ENCODE measurements at regions of chr9 and their contacts with region 1.

Region 1: DNA sequence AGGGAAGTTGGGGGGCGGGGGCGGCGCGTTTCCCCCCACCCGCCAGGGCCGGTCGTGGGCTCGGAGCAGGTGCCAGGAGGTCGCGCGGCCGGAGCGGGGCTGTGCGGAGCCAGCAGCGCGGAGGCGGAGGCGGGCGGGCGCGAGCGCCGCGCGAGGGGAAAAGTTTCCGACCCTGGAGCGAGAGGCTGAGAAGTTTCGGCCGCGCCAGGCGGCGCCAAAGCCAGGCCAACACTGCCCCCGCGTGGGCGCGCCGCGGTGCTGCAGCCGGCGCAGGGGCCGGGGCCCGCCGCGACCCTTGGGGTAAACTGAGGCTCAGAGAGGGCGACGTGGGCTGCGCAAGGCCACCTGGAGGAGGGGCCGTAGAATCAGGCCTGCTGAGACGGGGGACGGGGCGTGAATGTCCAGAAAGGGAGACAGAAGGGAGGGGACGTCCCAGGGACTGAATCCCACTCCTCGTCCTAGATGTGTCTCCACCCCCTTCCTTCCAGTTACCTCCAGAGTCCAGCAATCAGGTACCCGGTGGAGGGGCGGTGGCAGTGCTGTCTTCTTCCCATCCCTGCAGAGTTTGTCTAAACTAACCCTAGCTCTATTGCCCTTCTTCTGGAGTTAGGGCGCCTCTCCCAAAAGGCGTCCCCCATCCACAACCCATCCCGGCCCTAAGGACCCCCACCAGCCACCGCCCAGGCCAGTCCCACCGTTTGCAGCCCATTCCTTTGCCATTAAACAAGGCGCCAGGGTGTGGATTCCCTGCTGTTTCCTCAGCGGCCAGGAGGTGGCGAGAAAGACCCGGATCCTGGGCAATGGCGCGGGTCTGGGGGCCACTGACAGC is 10.2 kb downstream of the C9orf50 start:
- DNase-seq: peak; percentile 73 to 81 (median 76)
- ATAC-seq: peak; percentile 74
- H3K4me3 ChIP-seq: peak overlapping the region; percentile 64
- H3K27ac ChIP-seq: peak overlapping the region; percentile 74; the same call in 2 of the 3 replicates
- H3K4me1 ChIP-seq: peaks cover 11 to 68% of the 10 kb centered on the region in 2 experiments; a peak in 4 of 5 replicates
- H3K27me3 ChIP-seq: peaks cover 5 to 40% of the 10 kb centered on the region in 2 experiments; a peak in 4 of 5 replicates
- CTCF ChIP-seq: peak; percentile 74 to 94 (median 87)
- EP300 ChIP-seq: 0 out of 2 replicates have a peak, but pooled peaks have one; percentile 5
- POLR2A ChIP-seq: no peak
- RAD21 ChIP-seq: peak; percentile 98 to 99

Region 2: DNA sequence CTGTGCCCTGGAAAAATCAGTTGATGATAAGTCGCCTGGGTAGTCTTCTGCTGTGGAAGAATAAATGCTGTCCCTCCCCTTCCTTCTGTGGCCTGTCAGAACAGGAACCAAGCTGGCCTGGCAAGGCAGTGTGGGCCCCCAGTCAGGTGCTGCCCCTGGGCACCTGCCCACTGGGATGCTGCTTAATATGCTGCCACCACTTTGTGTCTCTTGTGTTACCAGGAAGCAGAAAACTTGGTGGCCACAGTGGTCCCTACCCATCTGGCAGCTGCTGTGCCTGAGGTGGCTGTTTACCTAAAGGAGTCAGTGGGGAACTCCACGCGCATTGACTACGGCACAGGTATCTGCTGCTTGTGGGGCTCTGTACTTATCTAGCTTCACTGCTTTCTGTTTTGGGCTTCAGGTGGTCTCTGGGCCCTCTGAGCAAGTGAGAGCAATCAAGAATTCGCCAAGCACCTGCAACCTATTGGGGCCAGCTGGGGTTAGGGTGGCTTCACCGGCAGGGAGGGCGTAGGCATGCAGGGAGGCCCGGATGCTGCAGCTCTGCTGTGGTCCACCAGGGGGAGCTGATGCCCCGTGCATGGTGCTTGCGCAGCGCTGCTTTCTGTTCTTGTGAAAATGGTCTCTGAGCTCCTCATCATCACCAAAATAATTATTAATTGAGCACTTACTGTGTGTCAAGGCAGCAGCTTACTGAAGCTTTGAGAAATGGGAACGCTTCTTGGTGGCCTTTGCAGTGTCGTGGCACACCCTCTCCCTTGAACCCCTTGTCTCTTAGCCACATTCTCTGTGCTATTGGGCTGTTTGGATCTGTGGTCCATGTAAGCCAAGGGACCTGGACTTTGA is 479.2 kb before region 1 on chr9:
- CTCF ChIA-PET with region 1: interaction called, 36 read pairs
- POLR2A ChIA-PET with region 1: interaction called, 5 read pairs
- in situ Hi-C with region 1: loop called (anchors 5 kb)
- intact Hi-C with region 1: no loop called
- DNase-seq: peak; percentile 83 to 89 (median 84)
- ATAC-seq: peak; percentile 99
- H3K4me3 ChIP-seq: no peak overlapping the region
- H3K27ac ChIP-seq: no peak overlapping the region
- H3K4me1 ChIP-seq: peaks cover 0 to 9% of the 10 kb centered on the region in 2 experiments; a peak in 2 of 5 replicates
- H3K27me3 ChIP-seq: no peaks in the 10 kb centered on the region
- CTCF ChIP-seq: peak; percentile 93 to 98 (median 95)
- EP300 ChIP-seq: 0 out of 2 replicates have a peak, but pooled peaks have one; percentile 21
- POLR2A ChIP-seq: no peak
- RAD21 ChIP-seq: peak; percentile 77 to 84

Region 3: GRCh38 chr9:129166623-129167557 is 443.8 kb before region 1 on chr9:
- CTCF ChIA-PET with region 1: no interaction called
- POLR2A ChIA-PET with region 1: no interaction called
- in situ Hi-C with region 1: no loop called
- intact Hi-C with region 1: loop called (anchors 2 kb)
- DNase-seq: peak; percentile 82 to 92 (median 90)
- ATAC-seq: peak; percentile 87
- H3K4me3 ChIP-seq: peak overlapping the region; percentile 34
- H3K27ac ChIP-seq: peak overlapping the region; percentile 50
- H3K4me1 ChIP-seq: peaks cover 29 to 33% of the 10 kb centered on the region in 2 experiments
- H3K27me3 ChIP-seq: peaks cover 0 to 1% of the 10 kb centered on the region in 2 experiments; a peak in 1 of 5 replicates
- CTCF ChIP-seq: no peak
- EP300 ChIP-seq: no peak
- POLR2A ChIP-seq: no peak
- RAD21 ChIP-seq: no peak

Region 4: GRCh38 chr9:129320575-129321263 is 290.0 kb before region 1 on chr9:
- CTCF ChIA-PET with region 1: no interaction called
- POLR2A ChIA-PET with region 1: no interaction called
- in situ Hi-C with region 1: loop called (anchors 25 kb)
- intact Hi-C with region 1: loop called (anchors 5 kb)
- DNase-seq: peak; percentile 53 to 63 (median 58)
- ATAC-seq: peak; percentile 87
- H3K4me3 ChIP-seq: no peak overlapping the region
- H3K27ac ChIP-seq: peak overlapping the region; percentile 34; the same call in 1 of the 3 replicates
- H3K4me1 ChIP-seq: peaks cover 14 to 27% of the 10 kb centered on the region in 2 experiments
- H3K27me3 ChIP-seq: 0 out of 5 replicates have a peak, but pooled peaks cover 0 to 3% of the 10 kb centered on the region in 2 experiments
- CTCF ChIP-seq: peak in 2 of 3 experiments; percentile 4 to 39; a peak in 2 of 6 replicates
- EP300 ChIP-seq: no peak
- POLR2A ChIP-seq: no peak
- RAD21 ChIP-seq: peak in 1 of 2 experiments; percentile 45; a peak in 3 of 4 replicates

Region 5: GRCh38 chr9:129460323-129461261 is 150.1 kb before region 1 on chr9:
- CTCF ChIA-PET with region 1: no interaction called
- POLR2A ChIA-PET with region 1: no interaction called
- in situ Hi-C with region 1: no loop called
- intact Hi-C with region 1: no loop called
- DNase-seq: peak; percentile 95 to 99 (median 97)
- ATAC-seq: peak; percentile 97
- H3K4me3 ChIP-seq: peak overlapping the region; percentile 28
- H3K27ac ChIP-seq: peak overlapping the region; percentile 94
- H3K4me1 ChIP-seq: peaks cover 30 to 53% of the 10 kb centered on the region in 2 experiments
- H3K27me3 ChIP-seq: no peaks in the 10 kb centered on the region; a peak in 1 of 5 replicates
- CTCF ChIP-seq: peak in 2 of 3 experiments; percentile 18 to 34; a peak in 3 of 6 replicates
- EP300 ChIP-seq: peak; percentile 71
- POLR2A ChIP-seq: peak; percentile 69
- RAD21 ChIP-seq: peak in 1 of 2 experiments; percentile 42; a peak in 3 of 4 replicates

Region 6: GRCh38 chr9:129487642-129488409 is 122.9 kb before region 1 on chr9:
- CTCF ChIA-PET with region 1: interaction called, 3 read pairs
- POLR2A ChIA-PET with region 1: interaction called, 3 read pairs
- in situ Hi-C with region 1: no loop called
- intact Hi-C with region 1: loop called (anchors 5 kb)
- DNase-seq: peak; percentile 66 to 77 (median 72)
- ATAC-seq: peak; percentile 38
- H3K4me3 ChIP-seq: peak overlapping the region; percentile 67
- H3K27ac ChIP-seq: peak overlapping the region; percentile 100
- H3K4me1 ChIP-seq: peaks cover 71 to 84% of the 10 kb centered on the region in 2 experiments
- H3K27me3 ChIP-seq: no peaks in the 10 kb centered on the region
- CTCF ChIP-seq: no peak
- EP300 ChIP-seq: no peak
- POLR2A ChIP-seq: peak; percentile 17
- RAD21 ChIP-seq: no peak

Region 7: DNA sequence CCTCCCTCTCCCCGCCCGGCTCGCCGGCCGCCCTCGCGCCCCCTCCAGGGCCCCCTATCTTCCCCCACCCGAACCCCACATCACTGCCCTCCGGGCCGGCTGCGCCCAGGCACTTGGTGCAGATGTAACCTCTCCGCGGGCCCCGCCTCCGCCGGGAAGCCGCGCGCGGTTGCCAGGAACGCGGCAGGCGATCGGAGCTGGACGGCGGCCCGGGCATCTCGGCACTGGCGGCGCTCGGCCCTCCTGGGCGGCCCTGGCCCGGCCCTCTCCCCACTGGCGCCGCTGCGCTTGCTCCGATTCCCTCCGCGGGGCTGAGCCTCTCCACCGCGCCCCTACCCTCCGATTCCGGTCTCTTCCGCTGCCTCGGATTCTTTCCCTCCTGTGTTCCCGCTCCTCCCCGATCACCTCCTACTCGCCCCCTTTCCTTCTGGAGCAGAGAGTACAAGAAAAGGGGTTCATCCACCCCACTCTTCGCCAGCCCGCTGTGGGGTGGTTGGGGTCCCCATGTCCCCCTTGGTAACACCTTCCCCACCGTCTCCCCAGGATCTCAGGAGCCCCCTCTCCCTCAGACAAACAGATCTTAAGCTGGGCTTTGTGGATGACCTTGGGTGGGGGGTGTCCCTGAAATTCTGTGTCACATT is 60.4 kb before region 1 on chr9:
- CTCF ChIA-PET with region 1: no interaction called
- POLR2A ChIA-PET with region 1: interaction called, 4 read pairs
- in situ Hi-C with region 1: no loop called
- intact Hi-C with region 1: loop called (anchors 10 kb)
- DNase-seq: no peak
- ATAC-seq: no peak
- H3K4me3 ChIP-seq: no peak overlapping the region
- H3K27ac ChIP-seq: no peak overlapping the region
- H3K4me1 ChIP-seq: peaks cover 0 to 14% of the 10 kb centered on the region in 2 experiments; a peak in 2 of 5 replicates
- H3K27me3 ChIP-seq: peaks cover 9 to 45% of the 10 kb centered on the region in 2 experiments; a peak in 3 of 5 replicates
- CTCF ChIP-seq: no peak
- EP300 ChIP-seq: no peak
- POLR2A ChIP-seq: no peak
- RAD21 ChIP-seq: no peak

Region 8: DNA sequence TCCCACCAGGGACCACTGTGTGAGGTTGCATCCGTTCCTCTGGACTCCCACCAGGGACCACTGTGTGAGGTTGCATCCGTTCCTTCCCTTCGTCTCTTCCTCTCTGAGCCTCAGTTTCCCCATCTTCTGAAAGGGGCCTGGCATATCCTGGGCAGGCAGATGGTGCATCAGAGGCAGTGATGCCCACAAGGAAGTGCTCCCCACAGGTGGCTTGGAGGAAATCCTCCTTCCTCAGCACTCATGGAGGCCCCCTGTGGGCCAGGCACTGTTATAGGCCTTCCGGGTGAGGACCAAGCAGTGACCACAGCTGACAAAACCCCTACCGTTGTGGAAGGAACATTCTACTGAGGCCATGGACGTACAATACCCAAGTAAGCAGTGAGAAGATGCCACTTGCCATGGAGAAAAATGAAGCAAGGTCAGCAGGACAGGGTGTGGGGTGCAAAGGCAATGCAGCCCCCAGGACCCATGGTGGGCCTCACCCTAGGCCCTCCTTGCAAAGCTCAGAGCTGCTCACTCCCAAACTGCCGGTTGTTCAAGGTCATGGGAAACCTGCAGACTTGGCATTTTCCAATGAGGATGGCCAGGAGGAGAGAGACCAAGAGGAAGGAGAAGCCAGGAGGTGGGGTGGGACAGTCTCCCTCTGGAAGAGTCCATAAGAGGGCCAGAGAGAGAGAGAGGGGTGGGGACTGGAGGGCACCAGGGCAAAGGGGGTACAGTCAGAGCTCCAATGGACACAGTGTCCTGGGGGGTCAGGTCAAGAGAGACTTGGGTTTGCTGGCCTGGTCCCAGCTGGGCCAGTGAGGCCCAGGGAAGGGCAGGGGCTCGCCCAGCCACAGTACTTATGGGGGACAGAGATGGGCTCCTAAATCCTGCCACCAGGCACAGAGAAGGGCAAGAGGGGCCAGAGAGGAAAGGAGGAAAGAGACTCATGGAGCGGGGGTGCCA is 40.9 kb before region 1 on chr9:
- CTCF ChIA-PET with region 1: interaction called, 3 read pairs
- POLR2A ChIA-PET with region 1: no interaction called
- in situ Hi-C with region 1: loop called (anchors 5 kb)
- intact Hi-C with region 1: loop called (anchors 2 kb)
- DNase-seq: peak; percentile 55 to 65 (median 60)
- ATAC-seq: peak; percentile 75
- H3K4me3 ChIP-seq: no peak overlapping the region
- H3K27ac ChIP-seq: peak overlapping the region; percentile 85
- H3K4me1 ChIP-seq: peaks cover 27 to 43% of the 10 kb centered on the region in 2 experiments
- H3K27me3 ChIP-seq: no peaks in the 10 kb centered on the region
- CTCF ChIP-seq: peak; percentile 54 to 69 (median 60)
- EP300 ChIP-seq: no peak
- POLR2A ChIP-seq: no peak
- RAD21 ChIP-seq: peak in 1 of 2 experiments; percentile 56; a peak in 2 of 4 replicates

Region 9: GRCh38 chr9:129761901-129762364 is 151.2 kb after region 1 on chr9:
- CTCF ChIA-PET with region 1: no interaction called
- POLR2A ChIA-PET with region 1: no interaction called
- in situ Hi-C with region 1: no loop called
- intact Hi-C with region 1: no loop called
- DNase-seq: no peak
- ATAC-seq: no peak
- H3K4me3 ChIP-seq: no peak overlapping the region
- H3K27ac ChIP-seq: no peak overlapping the region
- H3K4me1 ChIP-seq: peaks cover 23 to 26% of the 10 kb centered on the region in 2 experiments
- H3K27me3 ChIP-seq: no peaks in the 10 kb centered on the region
- CTCF ChIP-seq: no peak
- EP300 ChIP-seq: no peak
- POLR2A ChIP-seq: no peak
- RAD21 ChIP-seq: no peak

Measured in K562 (cell line).